A549 (cell line): ENCODE measurements at regions of chr17 and their contacts with region 1.

Region 1: DNA sequence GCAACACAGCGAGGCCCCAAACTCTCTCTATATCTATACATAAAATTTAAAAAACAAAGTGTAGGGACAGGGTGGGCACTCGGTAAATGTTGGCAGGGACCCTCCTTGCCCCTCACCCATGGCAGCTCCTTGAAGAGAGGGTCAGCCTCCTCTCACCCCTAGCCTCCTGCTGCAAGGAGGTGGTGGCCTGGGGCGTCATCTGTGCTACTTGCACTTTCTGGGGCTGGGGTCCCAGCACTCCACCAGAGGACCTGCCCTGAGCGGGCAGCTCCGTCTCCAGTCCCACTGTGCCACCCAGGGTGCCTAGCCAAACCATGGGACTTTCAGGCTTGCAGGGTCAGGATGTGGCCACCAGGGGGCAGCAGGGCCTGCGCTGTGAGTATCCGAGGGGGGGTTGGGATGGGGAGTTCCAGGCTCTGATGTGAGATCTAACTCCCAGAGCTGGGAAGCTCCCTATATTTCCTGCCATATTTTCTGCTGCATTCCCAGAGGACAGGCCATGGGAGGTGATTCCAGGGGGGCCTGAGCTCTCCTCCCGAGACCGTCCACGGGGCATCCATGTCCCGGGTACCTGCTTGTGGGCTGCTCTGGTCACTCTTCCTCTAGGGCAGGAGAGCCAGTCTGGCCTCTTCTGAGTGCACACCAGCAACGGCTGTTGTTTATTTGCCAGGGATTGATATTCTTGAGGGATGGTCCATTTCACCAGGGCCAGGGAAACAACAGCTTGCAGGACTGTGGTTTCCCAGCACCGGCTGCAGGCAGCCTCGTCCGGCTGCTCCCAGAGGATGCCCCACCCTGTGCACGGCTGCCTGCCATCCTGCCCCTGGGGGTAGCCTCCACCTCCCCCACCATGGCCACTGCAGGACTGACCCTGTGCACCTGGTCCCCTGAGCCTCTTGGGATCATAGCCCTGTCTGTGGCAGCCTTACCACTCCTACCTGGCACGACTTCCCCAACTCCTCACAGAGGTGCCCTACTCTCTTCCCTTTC is 1.1 kb downstream of the GPR142 start:
- DNase-seq: peak; percentile 66 to 88
- ATAC-seq: peak; percentile 62 to 89
- H3K4me3 ChIP-seq: no peak overlapping the region
- H3K27ac ChIP-seq: no peak overlapping the region
- H3K4me1 ChIP-seq: peaks cover 6% of the 10 kb centered on the region; the same call in 1 of the 3 replicates
- CTCF ChIP-seq: peak; percentile 94
- EP300 ChIP-seq: no peak
- POLR2A ChIP-seq: no peak
- RAD21 ChIP-seq: peak; percentile 85 to 87

Region 2: GRCh38 chr17:74296548-74296936 is 71.8 kb before region 1 on chr17:
- CTCF ChIA-PET with region 1: interaction called, 124 read pairs
- POLR2A ChIA-PET with region 1: no interaction called
- DNase-seq: peak; percentile 60 to 73
- ATAC-seq: peak; percentile 87
- H3K4me3 ChIP-seq: no peak overlapping the region
- H3K27ac ChIP-seq: no peak overlapping the region
- H3K4me1 ChIP-seq: peaks cover 7% of the 10 kb centered on the region; the same call in 2 of the 3 replicates
- CTCF ChIP-seq: peak; percentile 53
- EP300 ChIP-seq: no peak
- POLR2A ChIP-seq: no peak
- RAD21 ChIP-seq: peak; percentile 31 to 48; a peak in 3 of 5 replicates

Region 3: GRCh38 chr17:74317071-74317470 is 51.3 kb before region 1 on chr17:
- CTCF ChIA-PET with region 1: interaction called, 10 read pairs
- POLR2A ChIA-PET with region 1: no interaction called
- DNase-seq: no peak
- ATAC-seq: no peak
- H3K4me3 ChIP-seq: no peak overlapping the region
- H3K27ac ChIP-seq: no peak overlapping the region
- H3K4me1 ChIP-seq: no peaks in the 10 kb centered on the region
- CTCF ChIP-seq: no peak
- EP300 ChIP-seq: no peak
- POLR2A ChIP-seq: no peak
- RAD21 ChIP-seq: no peak

Region 4: DNA sequence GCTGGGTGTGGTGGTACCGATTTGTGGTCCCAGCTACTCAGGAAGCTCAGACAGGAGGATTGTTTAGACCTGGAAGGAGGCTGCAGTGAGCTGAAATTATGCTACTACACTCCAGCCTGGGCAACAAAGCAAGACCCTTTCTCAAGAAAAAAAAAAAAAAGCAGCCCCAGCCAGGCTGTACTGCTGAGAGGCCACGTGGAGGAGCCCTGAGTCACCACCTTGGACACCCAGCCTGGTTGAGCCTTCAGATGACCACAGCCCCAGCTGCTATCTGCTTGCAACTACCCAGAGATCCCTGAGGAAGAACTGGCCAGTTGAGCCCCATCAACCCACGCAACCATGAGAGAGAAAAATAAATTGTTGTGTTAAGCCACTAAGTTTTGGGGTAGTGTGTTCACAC is 39.9 kb after region 1 on chr17:
- CTCF ChIA-PET with region 1: interaction called, 16 read pairs
- POLR2A ChIA-PET with region 1: no interaction called
- DNase-seq: peak; percentile 75 to 78
- ATAC-seq: peak; percentile 94 to 97
- H3K4me3 ChIP-seq: no peak overlapping the region
- H3K27ac ChIP-seq: peak overlapping the region in 1 of 2 experiments; percentile 61; a peak in 3 of 6 replicates
- H3K4me1 ChIP-seq: peaks cover 15% of the 10 kb centered on the region
- CTCF ChIP-seq: peak; percentile 60
- EP300 ChIP-seq: no peak
- POLR2A ChIP-seq: no peak
- RAD21 ChIP-seq: peak; percentile 77 to 79

Region 5: DNA sequence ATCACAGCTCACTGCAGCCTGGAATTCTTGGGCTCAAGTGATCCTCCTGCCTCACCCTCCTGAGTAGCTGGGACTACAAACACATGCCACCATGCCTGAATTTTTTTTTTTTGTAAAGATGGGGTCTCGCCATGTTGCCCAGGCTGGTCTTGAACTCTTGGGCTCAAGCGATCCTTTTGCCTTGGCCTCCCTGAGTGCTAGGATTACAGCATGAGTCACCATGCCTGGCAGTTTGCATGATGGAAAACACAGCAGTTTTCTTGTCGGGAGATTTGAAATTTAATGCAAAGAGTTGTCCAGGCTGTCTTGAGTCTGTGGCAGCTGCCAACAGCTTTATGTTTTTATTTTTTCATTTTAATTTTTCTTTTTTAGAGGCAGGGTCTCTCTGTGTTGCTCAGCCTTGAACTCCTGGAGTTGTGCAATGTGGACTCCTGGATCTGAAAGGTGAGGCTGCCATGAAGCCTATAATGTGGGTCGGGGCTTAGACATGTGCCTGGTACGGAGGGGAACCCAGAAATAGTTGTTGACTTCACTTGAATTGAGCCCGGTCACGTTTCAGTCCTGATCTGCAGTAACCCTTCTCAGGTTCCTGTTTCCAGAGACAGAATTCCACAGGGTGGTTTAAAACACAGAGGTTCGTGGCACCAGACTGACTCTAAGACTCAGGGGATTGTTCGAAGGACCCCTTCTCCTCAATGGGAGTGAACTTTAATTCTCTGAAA is 116.8 kb after region 1 on chr17:
- CTCF ChIA-PET with region 1: interaction called, 18 read pairs
- POLR2A ChIA-PET with region 1: no interaction called
- DNase-seq: no peak
- ATAC-seq: no peak
- H3K4me3 ChIP-seq: no peak overlapping the region
- H3K27ac ChIP-seq: no peak overlapping the region
- H3K4me1 ChIP-seq: no peaks in the 10 kb centered on the region
- CTCF ChIP-seq: no peak
- EP300 ChIP-seq: no peak
- POLR2A ChIP-seq: no peak
- RAD21 ChIP-seq: no peak

Region 6: DNA sequence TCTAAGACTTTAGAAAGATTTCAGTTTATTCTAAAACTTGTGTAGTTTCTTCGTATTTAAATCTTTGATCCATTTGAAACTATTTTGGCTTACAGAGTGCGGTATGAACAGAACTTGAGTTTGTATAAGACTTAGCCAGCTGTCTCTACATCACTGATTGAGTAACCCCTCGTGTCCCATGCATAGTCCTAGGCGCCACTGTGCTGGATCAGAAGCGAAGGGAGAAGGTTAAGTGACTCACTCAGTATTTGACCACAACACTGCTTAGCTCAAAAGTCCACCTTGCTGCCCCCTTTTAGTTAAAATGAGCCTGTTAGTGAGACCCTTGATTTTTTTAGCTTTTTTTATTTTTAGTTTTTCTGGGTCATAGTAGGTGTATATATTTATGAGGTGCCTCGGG is 134.5 kb after region 1 on chr17:
- CTCF ChIA-PET with region 1: interaction called, 59 read pairs
- POLR2A ChIA-PET with region 1: no interaction called
- DNase-seq: no peak
- ATAC-seq: no peak
- H3K4me3 ChIP-seq: no peak overlapping the region
- H3K27ac ChIP-seq: no peak overlapping the region
- H3K4me1 ChIP-seq: no peaks in the 10 kb centered on the region
- CTCF ChIP-seq: no peak
- EP300 ChIP-seq: no peak
- POLR2A ChIP-seq: no peak
- RAD21 ChIP-seq: no peak

Region 7: DNA sequence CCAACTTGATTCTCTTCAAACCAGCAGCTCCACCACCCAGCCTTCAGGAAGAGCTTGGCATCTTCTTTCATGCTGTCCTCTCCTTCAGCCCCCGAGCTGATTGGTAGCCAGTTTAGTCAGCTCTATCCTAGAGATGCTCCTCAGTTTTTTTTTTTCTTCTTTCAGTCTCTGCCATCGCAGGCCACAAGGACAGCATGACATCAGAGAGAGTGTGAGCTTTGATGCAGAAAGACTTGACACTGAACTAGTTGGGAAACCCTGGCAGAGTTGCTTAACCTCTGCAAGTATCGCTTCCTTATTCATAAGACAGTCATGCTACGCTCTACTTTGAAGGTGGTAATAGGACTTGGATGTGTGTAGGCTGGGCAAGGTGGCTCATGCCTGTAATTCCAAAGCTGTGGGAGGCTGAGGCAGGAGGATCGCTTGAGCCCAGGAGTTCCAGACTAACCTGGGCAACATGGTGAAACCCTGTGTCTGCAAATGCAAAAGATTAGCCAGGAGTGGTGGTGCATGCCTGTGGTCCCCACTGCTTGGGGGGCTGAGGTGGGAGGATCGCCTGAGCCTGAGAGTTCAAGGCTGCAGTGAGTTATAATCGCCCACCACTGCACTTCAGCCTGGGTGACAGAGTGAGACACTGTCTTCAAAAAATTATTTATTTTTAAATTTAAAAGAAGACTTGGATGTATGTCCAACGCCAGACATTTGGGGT is 160.3 kb after region 1 on chr17:
- CTCF ChIA-PET with region 1: interaction called, 59 read pairs
- POLR2A ChIA-PET with region 1: no interaction called
- DNase-seq: no peak
- ATAC-seq: no peak
- H3K4me3 ChIP-seq: no peak overlapping the region
- H3K27ac ChIP-seq: no peak overlapping the region
- H3K4me1 ChIP-seq: no peaks in the 10 kb centered on the region
- CTCF ChIP-seq: no peak
- EP300 ChIP-seq: no peak
- POLR2A ChIP-seq: no peak
- RAD21 ChIP-seq: no peak